ENCODE measurements at regions of chr2 and their contacts with region 1.

Region 1: GRCh38 chr2:232668805-232669444 is 28.2 kb upstream of the GIGYF2 start:
- DNase-seq: no peak
- ATAC-seq: peak; percentile 79

Region 2: GRCh38 chr2:232600053-232600773 is 68.7 kb before region 1 on chr2:
- intact Hi-C with region 1: loop called (anchors 10 kb)
- DNase-seq: no peak
- ATAC-seq: no peak

Region 3: GRCh38 chr2:234536178-234536965 is 1867.4 kb after region 1 on chr2:
- intact Hi-C with region 1: loop called (anchors 5 kb)
- DNase-seq: no peak
- ATAC-seq: no peak